CD4-positive, alpha-beta T cell (primary cell): ENCODE measurements at regions of chr7 and their contacts with region 1.

Region 1: GRCh38 chr7:123557398-123558288 is at the start of gene NDUFA5:
- DNase-seq: peak; percentile 91 to 99 (median 95)
- ATAC-seq: peak; percentile 97
- H3K4me3 ChIP-seq: peak within 1 kb of the TSS; percentile 69
- H3K4me3 Mint-ChIP-seq: no peak within 1 kb of the TSS
- H3K27ac ChIP-seq: peak within 1 kb of the TSS; percentile 58 to 66
- H3K27ac Mint-ChIP-seq: no peak within 1 kb of the TSS
- H3K4me1 ChIP-seq: peaks cover 8% of the 10 kb centered on the region
- H3K4me1 Mint-ChIP-seq: peaks cover 11% of the 10 kb centered on the region
- H3K27me3 ChIP-seq: no peaks in the 10 kb centered on the region
- H3K27me3 Mint-ChIP-seq: no peaks in the 10 kb centered on the region
- CTCF ChIP-seq: no peak
- total RNA-seq, gene NDUFA5: 67.9 to 68.6 TPM

Region 2: GRCh38 chr7:123494193-123494796 is 63.3 kb before region 1 on chr7:
- CTCF ChIA-PET with region 1: interaction called, 12 read pairs
- POLR2A ChIA-PET with region 1: interaction called, 4 read pairs
- intact Hi-C with region 1: no loop called
- DNase-seq: peak in 9 of 14 experiments; percentile 1 to 68 (median 17)
- ATAC-seq: no peak
- H3K4me3 ChIP-seq: no peak overlapping the region
- H3K4me3 Mint-ChIP-seq: no peak overlapping the region
- H3K27ac ChIP-seq: no peak overlapping the region
- H3K27ac Mint-ChIP-seq: no peak overlapping the region
- H3K4me1 ChIP-seq: no peaks in the 10 kb centered on the region
- H3K4me1 Mint-ChIP-seq: no peaks in the 10 kb centered on the region
- H3K27me3 ChIP-seq: peaks cover 0 to 5% of the 10 kb centered on the region in 2 experiments
- H3K27me3 Mint-ChIP-seq: peaks cover 27% of the 10 kb centered on the region
- CTCF ChIP-seq: peak; percentile 86

Region 3: DNA sequence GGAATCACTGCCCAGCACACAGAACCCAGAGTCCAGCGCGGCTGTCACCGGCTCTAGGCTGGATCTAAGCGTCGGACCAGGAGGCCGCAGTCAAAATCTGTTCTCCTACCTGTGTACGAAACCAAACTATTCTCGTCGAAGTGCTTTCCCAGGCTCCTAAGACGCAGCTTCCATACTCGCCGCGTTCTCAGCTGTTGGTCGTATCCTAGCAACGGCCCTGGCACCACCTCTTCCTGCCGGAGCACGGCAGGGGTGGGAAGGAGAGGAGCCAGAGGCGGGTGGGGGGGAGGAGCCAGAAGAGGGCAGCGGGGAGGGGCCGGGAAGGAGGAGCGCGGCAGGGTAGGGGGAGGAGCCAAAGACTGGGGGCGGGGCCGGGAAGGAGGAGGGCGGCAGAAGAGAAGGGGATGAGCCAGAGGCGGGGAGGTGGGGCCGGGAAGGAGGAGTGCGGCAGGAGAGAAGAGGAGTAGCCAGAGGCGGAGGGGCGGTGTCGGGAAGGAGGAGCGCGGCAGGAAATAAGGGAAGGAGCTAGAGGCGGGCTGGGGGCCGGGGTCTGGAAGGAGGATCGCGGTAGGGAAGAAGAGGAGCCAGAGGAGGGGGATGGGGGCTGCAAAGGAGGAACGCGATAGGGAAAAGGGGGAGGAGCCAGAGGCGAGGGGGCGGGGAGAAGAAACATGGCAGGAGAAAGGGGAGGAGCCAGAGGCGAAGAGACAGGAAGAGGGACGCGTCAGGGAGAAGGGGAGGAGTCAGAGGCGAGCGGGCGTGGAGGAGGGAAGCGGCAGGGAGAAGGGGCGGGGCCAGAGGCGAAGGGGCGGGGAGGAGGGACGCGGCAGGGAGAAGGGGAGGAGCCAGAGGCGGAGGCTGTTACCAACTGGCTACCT is 23.0 kb before region 1 on chr7 and contains the start of gene IQUB:
- CTCF ChIA-PET with region 1: interaction called, 3 read pairs
- POLR2A ChIA-PET with region 1: interaction called, 44 read pairs
- intact Hi-C with region 1: loop called (anchors 1 kb)
- DNase-seq: peak; percentile 88 to 99 (median 96)
- ATAC-seq: peak; percentile 83
- H3K4me3 ChIP-seq: peak within 1 kb of the TSS; percentile 78
- H3K4me3 Mint-ChIP-seq: peak within 1 kb of the TSS; percentile 91
- H3K27ac ChIP-seq: peak within 1 kb of the TSS in 1 of 2 donors; percentile 79
- H3K27ac Mint-ChIP-seq: peak within 1 kb of the TSS; percentile 40
- H3K4me1 ChIP-seq: peaks cover 23% of the 10 kb centered on the region
- H3K4me1 Mint-ChIP-seq: peaks cover 38% of the 10 kb centered on the region
- H3K27me3 ChIP-seq: peaks cover 4 to 12% of the 10 kb centered on the region in 2 experiments
- H3K27me3 Mint-ChIP-seq: peaks cover 21% of the 10 kb centered on the region
- CTCF ChIP-seq: no peak
- total RNA-seq, gene IQUB: not detected

Region 4: DNA sequence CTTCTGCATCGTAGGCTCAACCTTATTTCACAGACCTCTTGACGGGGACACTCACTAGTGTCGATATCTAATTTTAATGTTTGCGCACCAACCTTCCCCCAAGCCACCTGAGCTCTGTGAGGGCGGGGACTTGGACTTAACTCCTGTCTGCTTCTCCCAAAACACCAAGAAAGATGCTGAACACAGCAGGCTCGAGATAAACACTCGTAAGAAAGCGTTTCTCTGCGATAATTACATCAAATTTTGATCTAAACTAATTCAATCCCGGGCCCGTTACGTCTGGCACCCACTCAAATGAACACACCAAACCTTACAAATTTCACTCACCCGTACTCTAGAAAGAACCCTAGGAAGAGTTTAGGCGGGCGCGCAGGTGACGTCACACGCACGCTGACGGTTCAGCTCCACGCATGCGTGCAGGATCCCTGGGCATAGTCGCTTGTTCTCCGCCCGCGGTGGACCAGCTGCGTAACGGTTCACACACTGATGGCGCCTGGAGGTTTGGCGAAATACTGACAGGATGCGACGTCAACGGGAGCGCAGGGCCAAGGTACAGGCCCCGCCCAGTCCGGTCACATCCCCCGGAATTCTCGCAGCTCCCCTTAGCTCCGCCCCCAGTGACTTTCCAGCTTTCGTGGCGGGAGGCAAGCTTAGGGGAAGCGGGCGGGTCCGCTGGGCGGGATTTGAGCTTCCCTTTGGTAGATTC is 1372.0 kb after region 1 on chr7 and contains the start of gene POT1:
- CTCF ChIA-PET with region 1: no interaction called
- POLR2A ChIA-PET with region 1: interaction called, 5 read pairs
- intact Hi-C with region 1: loop called in 1 of 2 experiments (anchors 5 kb)
- DNase-seq: peak; percentile 91 to 99 (median 94)
- ATAC-seq: peak; percentile 95
- H3K4me3 ChIP-seq: peak within 1 kb of the TSS; percentile 76
- H3K4me3 Mint-ChIP-seq: peak within 1 kb of the TSS; percentile 90
- H3K27ac ChIP-seq: peak within 1 kb of the TSS; percentile 77 to 90
- H3K27ac Mint-ChIP-seq: peak within 1 kb of the TSS; percentile 88
- H3K4me1 ChIP-seq: peaks cover 9% of the 10 kb centered on the region
- H3K4me1 Mint-ChIP-seq: peaks cover 48% of the 10 kb centered on the region
- H3K27me3 ChIP-seq: no peaks in the 10 kb centered on the region
- H3K27me3 Mint-ChIP-seq: no peaks in the 10 kb centered on the region
- CTCF ChIP-seq: no peak
- total RNA-seq, gene POT1: 8.0 to 8.3 TPM